GM23248 (cell line): ENCODE measurements at regions of chr12 and their contacts with region 1.

Region 1: DNA sequence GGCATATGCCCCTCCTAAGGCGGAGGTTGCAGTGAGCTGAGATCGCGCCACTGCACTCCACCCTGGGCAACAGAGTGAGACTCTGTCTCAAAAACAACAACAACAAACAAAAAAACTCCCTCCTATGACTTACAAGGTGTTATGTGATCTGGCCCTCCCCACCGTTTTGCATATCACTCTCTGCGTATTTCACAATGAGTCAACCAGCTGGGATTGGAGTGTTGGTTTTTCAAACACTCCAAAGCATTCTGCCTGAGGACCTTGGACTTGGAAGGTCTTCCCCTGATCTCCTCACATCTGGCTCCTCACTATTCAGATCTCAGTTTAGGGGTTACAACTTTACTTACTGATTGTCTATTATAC is 14.0 kb downstream of the MANSC1 start:
- DNase-seq: no peak
- H3K4me3 ChIP-seq: no peak overlapping the region
- H3K27ac ChIP-seq: no peak overlapping the region
- H3K4me1 ChIP-seq: no peaks in the 10 kb centered on the region
- H3K27me3 ChIP-seq: no peaks in the 10 kb centered on the region

Region 2: DNA sequence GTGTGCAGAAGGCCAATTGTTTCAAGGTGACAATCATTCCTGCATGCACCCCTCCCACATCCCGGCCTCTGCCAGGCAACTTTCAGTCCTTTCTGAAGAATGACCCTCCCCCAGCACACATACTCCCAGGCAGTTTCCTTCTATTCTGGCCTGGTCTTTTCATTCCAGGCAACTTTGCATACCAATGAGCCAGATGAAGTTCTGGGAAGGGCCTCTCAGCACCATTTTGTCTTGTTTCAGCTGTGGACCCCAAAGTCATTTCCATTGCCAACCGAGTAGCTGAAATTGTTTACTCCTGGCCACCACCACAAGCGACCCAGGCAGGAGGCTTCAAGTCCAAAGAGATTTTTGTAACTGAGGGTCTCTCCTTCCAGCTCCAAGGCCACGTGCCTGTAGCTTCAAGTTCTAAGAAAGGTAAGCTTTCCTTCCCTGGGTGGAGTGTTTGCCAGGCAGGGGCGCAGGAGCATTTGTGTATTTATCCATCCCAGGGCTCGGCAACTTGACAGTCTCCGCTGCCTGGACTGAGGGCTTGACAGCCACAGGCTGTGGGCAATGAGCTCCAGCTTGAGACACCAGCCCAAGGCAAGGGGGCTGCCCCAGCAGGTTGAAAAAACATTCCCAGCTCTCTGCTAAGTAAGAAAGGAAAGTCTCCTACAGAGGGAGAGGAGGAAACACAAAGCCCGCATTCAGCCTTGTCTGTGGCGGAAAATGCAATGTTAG is 248.9 kb before region 1 on chr12:
- in situ Hi-C with region 1: loop called (anchors 5 kb)
- DNase-seq: no peak
- H3K4me3 ChIP-seq: no peak overlapping the region
- H3K27ac ChIP-seq: no peak overlapping the region
- H3K4me1 ChIP-seq: peaks cover 6% of the 10 kb centered on the region; the same call in 1 of the 2 replicates
- H3K27me3 ChIP-seq: no peaks in the 10 kb centered on the region